Right ventricle myocardium superior (tissue), 1 donor: ENCODE measurements at regions of chr11 and their contacts with region 1.

Region 1: DNA sequence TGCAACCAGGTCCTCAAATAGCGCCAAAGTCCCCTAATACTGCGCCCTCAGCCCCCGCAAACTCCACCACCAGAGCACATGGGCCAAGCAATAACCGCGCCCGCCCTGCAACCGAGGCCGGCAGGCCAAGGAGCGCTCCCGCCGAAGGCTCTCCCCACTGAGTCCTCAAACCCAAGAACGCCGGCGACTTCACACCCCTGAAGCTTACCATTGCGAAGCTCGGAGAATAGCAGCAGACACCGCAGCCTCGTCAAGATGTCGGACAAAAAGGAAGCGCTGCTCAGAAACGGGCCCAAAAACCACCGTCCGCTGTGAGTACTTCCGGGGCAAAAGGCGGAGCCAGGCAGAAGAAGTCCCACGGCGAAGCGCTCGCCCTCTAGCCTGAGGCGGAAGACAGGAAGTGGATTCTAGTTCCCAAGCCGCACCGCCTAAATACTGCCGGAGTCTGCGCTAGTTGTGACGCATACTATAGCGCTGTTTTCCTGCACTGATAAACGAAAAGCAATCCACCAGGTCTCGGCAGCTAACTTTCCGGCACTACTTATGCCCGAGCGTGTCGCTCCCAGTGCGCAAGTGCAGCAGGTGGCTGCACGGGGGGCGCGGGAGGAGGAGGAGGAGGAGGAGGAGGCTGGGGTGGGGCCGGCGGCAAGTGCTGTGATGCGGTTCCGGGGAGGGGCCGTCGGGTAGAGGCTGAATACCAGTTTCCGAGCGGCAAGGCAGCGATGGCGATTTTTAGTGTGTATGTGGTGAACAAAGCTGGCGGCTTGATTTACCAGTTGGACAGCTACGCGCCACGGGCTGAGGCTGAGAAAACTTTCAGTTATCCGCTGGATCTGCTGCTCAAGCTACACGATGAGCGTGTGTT is at the starts of genes RPS25 and TRAPPC4:
- DNase-seq: peak; percentile 97
- ATAC-seq: peak; percentile 97
- total RNA-seq, gene RPS25: 827 TPM
- total RNA-seq, gene TRAPPC4: 30.7 TPM

Region 2: GRCh38 chr11:118997627-118998387 is 20.5 kb before region 1 on chr11 and contains the start of gene CENATAC:
- intact Hi-C with region 1: loop called (anchors 2 kb)
- DNase-seq: peak; percentile 98
- ATAC-seq: peak; percentile 100
- total RNA-seq, gene CENATAC: 10.0 TPM

Region 3: DNA sequence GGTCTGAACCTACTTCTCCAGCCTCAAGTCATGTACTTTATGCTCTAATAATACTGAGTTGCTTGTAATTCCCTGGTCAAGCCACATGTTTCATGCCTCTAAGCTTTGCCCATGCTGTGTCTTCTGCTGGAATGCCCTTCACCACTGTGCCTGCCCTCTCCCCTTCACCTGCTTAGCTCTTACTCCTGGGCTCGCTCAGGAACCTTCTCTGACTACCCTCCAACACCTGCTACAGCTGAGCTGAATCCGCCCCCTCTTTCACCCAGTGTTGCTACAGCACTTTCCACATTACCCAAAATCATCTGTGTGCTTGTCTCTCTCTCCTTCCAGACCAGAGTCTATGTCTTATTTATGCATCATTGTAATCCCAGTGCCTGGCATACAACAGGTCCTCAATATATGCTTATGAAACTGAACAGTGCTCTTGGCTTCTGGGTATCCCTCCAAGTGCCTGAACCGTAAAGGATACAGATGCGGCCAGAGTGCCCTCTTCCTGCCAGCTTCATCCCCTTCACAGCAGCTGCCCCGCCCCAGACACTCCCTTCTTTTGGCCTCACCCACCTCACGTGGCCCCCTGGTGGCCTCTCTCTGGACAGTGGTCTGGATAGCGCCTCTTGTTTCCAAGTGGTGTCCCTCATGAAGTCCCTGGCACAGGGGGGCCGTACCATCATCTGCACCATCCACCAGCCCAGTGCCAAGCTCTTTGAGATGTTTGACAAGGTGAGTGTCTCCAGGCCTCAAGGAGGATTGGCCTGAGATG is 137.6 kb after region 1 on chr11:
- intact Hi-C with region 1: no loop called
- DNase-seq: no peak
- ATAC-seq: peak; percentile 31

Region 4: DNA sequence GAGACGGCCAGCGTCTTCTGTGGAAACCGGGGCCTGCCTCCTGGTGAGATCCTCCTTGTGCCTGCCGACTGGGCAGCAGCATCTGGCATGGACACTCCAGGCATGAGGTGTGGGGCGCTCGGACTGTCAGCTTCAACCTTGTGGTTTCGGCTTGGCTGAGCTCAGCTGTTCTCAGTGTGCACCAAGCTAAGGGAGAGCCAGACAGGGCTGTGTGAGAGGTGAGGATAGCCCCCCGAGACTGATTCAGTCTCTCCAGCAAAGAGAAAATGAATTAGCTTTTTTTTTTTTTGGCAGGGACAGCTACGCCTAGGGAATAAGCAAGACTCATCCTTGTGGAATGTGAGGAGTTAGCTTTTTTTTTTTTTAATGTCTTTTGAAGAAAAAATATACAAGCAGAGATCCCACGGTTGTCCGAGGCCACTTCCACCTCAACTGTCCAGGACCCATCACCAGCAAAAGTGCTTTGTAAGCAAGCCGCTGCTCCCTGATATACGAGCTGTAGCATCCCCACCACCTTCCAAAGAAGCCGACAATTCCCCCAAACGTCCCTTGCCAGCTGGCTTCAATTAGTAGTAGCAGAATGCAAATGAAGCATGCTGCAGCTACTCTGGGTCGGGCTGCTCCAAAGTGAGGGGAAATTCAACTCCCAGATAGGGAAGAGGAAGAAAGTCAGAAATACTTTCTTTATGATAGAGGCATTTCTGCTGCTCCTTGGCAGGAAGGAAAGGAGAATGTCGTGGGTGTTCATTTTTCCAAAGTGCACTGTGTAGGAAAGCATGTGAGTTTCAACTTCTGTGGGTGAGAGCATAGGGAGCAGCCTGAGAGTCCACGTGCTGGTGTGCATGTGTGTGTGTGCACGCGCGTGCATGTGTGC is 414.4 kb after region 1 on chr11:
- intact Hi-C with region 1: no loop called
- DNase-seq: no peak
- ATAC-seq: peak; percentile 29